ENCODE measurements at regions of chr9 and their contacts with region 1.

Region 1: GRCh38 chr9:2039294-2040190 is 24.4 kb downstream of the SMARCA2 start:
- DNase-seq: no peak
- H3K4me3 Mint-ChIP-seq: no peak overlapping the region
- H3K27ac Mint-ChIP-seq: no peak overlapping the region
- H3K4me1 Mint-ChIP-seq: peaks cover 51% of the 10 kb centered on the region
- H3K27me3 Mint-ChIP-seq: no peaks in the 10 kb centered on the region

Region 2: DNA sequence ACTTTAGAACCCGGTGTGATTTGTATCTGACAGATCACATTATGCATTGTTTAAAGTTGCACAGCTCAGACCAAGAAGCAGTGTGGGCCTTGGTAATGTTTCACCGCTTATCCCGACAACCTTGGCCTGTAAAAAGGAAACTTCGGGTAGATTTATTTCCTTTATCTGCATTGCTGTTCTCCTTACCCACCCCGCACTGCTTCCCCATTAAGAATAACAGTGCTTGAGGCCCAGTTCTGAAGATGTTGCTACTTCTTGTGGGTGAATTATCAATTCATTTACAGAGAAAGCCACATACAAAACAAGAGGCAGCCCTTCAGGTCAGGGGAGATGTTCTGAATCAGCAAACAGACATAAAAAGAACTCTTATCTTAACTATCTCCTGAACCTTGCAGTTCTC is 16.0 kb before region 1 on chr9:
- intact Hi-C with region 1: loop called (anchors 1 kb)
- DNase-seq: no peak
- H3K4me3 Mint-ChIP-seq: peak overlapping the region; percentile 76
- H3K27ac Mint-ChIP-seq: peak overlapping the region; percentile 86
- H3K4me1 Mint-ChIP-seq: peaks cover 97% of the 10 kb centered on the region
- H3K27me3 Mint-ChIP-seq: no peaks in the 10 kb centered on the region

Region 3: GRCh38 chr9:2053883-2054845 is 14.6 kb after region 1 on chr9:
- intact Hi-C with region 1: loop called (anchors 2 kb)
- DNase-seq: peak; percentile 68
- H3K4me3 Mint-ChIP-seq: peak overlapping the region; percentile 24
- H3K27ac Mint-ChIP-seq: peak overlapping the region; percentile 56
- H3K4me1 Mint-ChIP-seq: peaks cover 48% of the 10 kb centered on the region
- H3K27me3 Mint-ChIP-seq: no peaks in the 10 kb centered on the region

Measured in activated T-helper 1 cell treated with anti-CD3 and anti-CD28 coated beads, Interleukin-12 subunit alpha, Interleukin-12 subunit beta, Interleukin-2, Interleukin-4 antibody, amounts not matched to agents 30 ng/mL and 10 ng/mL and 1 ng/mL, durations not matched to agents 14 hours and 24 hours and 36 hours (primary cell).